Activated CD4-positive, alpha-beta T cell treated with anti-CD3 and anti-CD28 coated beads for 36 hours (primary cell): ENCODE measurements at regions of chr3 and their contacts with region 1.

Region 1: GRCh38 chr3:195259475-195260279 is 11.3 kb downstream of the XXYLT1 start:
- DNase-seq: peak; percentile 90
- ATAC-seq: peak; percentile 81
- H3K4me3 Mint-ChIP-seq: peak overlapping the region; percentile 30
- H3K27ac Mint-ChIP-seq: no peak overlapping the region
- H3K4me1 Mint-ChIP-seq: peaks cover 15% of the 10 kb centered on the region
- H3K27me3 Mint-ChIP-seq: no peaks in the 10 kb centered on the region

Region 2: DNA sequence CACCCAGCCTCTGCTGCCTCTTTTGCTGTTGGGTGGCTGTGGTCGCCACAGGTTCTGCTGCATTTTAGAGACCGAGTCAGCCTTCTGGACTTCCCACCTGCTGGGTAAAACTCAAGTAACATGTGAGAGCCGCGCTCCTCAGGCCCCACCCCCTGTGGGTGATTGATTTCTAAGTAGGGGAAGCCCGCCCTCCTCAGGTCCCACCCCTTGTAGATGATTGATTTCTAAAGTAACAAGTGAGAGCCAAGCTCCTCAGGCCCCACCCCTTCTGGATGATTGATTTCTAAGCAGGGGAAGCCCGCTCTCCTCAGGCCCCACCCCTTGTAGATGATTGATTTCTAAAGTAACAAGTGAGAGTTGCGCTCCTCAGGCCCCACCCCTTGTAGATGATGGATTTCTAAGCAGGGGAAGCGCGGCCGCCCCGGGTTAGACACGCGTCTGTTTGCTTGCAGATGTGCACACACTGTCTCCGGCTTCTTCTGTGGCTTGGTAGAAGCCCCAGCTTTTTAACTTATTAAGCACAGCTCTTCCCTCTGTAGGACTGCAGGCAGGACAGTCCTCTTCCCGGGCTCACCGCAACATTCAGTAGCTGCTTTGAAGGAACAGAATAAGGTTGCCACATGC is 490.5 kb before region 1 on chr3:
- CTCF ChIA-PET with region 1: no interaction called
- POLR2A ChIA-PET with region 1: no interaction called
- intact Hi-C with region 1: loop called (anchors 1 kb)
- DNase-seq: peak; percentile 96
- ATAC-seq: peak; percentile 99
- H3K4me3 Mint-ChIP-seq: peak overlapping the region; percentile 76
- H3K27ac Mint-ChIP-seq: peak overlapping the region; percentile 91
- H3K4me1 Mint-ChIP-seq: peaks cover 17% of the 10 kb centered on the region
- H3K27me3 Mint-ChIP-seq: peaks cover 9% of the 10 kb centered on the region

Region 3: DNA sequence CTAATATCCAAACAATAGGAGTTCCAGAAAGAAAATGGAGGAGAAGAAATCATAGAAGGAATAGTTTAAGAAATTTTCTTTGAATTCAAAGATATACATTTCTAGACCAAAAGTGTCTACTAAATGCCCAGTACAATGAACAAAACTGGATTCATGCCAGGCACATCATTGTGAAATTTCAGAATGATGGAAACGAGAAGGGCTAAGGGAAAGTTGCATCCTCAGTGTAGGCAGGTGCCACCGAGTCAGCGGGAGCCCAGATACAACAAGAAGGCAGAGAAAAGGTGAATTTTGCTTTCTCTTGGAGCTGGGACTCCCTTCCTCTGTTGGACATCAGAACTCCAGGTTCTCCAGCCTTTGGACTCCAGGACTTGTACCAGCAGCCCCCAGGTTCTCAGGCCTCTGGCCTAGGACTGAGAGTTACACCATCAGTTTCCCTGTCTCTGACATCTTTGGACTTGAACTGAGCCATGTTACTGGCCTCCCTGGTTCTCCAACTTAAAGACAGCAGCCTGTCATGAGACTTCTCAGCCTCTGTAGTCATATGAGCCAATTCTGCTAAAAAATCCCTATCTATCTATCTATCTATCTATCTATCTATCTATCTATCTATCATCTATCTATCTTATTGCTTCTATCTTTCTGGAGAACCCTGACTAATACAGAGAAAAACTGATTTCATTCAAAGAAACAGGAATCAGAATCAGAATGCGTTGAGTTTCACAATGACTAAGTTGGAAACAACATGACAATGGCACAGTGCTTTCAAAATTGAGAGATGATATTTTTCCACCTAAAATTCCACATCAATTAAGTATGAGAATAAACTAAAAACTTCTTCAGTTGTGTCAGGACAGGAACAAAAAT is 366.3 kb before region 1 on chr3:
- CTCF ChIA-PET with region 1: no interaction called
- POLR2A ChIA-PET with region 1: no interaction called
- intact Hi-C with region 1: loop called in 1 of 2 experiments (anchors 5 kb)
- DNase-seq: peak; percentile 43
- ATAC-seq: peak; percentile 86
- H3K4me3 Mint-ChIP-seq: no peak overlapping the region
- H3K27ac Mint-ChIP-seq: no peak overlapping the region
- H3K4me1 Mint-ChIP-seq: peaks cover 11% of the 10 kb centered on the region
- H3K27me3 Mint-ChIP-seq: peaks cover 21% of the 10 kb centered on the region

Region 4: DNA sequence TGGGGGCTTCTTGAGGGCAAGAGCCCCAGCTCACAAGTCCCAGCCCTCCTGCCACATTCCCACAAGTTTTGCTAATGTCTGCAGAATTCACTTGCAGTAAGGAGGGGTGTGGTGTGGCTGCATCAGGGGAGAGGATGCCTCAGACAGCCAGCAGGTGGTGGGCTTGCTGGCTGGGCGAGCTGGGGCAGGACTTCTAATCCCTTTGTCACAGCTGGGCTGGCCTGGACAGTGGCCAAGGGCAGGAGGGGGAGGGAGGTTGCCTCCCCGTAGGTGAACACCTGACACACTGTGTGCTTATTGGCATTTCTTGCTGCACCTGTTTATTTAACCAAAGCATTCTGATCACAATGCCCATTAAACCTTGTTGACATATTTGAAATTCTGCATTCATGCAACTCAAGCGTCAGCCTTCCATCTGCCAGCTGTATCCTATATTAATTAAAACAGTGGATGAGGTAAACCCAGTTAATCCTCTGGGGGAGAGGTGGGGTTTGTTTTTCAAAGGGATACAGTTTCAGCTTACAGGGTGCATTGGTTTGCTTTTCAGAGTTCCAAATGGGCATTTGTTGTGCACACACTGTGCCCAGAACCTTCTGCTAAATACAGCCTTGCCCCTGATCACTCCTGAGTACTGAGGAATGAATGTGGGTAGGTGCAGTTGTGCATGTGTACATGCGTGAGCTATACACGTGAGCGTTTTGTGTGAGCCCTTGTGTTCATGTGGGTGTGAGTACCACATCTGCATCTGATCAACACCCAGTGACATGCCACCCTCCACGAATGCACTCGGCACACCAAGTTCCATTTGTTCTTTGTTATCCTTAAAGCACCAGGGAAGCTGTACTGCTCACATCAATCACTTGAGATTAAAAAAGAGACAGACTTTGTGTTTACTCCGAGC is 257.5 kb before region 1 on chr3:
- CTCF ChIA-PET with region 1: interaction called, 3 read pairs
- POLR2A ChIA-PET with region 1: interaction called, 4 read pairs
- intact Hi-C with region 1: loop called in 1 of 2 experiments (anchors 2 kb)
- DNase-seq: peak; percentile 40
- ATAC-seq: no peak
- H3K4me3 Mint-ChIP-seq: no peak overlapping the region
- H3K27ac Mint-ChIP-seq: no peak overlapping the region
- H3K4me1 Mint-ChIP-seq: no peaks in the 10 kb centered on the region
- H3K27me3 Mint-ChIP-seq: peaks cover 5% of the 10 kb centered on the region

Region 5: DNA sequence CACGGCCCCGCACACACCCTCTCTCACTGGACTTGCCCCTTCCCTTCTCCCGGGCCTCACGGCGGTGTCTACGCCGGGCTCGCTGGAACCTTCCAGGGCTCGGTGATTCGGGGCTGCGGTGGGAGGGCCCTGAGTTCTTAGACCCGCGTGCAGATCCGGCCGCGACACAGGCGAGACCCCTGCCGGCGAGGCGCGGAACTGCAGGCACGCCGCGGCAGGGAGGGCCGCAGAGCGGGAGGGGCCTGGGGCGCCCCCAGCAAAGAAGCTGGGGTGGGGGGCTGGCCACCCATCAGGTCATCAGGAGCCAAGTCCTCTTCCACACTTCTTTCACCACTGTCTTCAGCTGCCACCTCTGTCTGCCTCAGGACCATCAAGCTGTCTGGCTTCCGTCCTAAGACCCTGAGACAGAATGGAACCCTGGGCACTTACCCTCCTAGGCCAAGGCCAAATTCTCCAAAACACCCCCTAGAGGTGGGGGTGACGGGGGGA is 153.2 kb before region 1 on chr3:
- CTCF ChIA-PET with region 1: no interaction called
- POLR2A ChIA-PET with region 1: no interaction called
- intact Hi-C with region 1: loop called in 1 of 2 experiments (anchors 1 kb)
- DNase-seq: peak; percentile 80
- ATAC-seq: peak; percentile 85
- H3K4me3 Mint-ChIP-seq: peak overlapping the region; percentile 9
- H3K27ac Mint-ChIP-seq: peak overlapping the region; percentile 55
- H3K4me1 Mint-ChIP-seq: peaks cover 4% of the 10 kb centered on the region
- H3K27me3 Mint-ChIP-seq: no peaks in the 10 kb centered on the region

Region 6: GRCh38 chr3:195129644-195130492 is 129.8 kb before region 1 on chr3:
- CTCF ChIA-PET with region 1: no interaction called
- POLR2A ChIA-PET with region 1: no interaction called
- intact Hi-C with region 1: loop called in 1 of 2 experiments (anchors 2 kb)
- DNase-seq: peak; percentile 64
- ATAC-seq: peak; percentile 67
- H3K4me3 Mint-ChIP-seq: peak overlapping the region; percentile 54
- H3K27ac Mint-ChIP-seq: peak overlapping the region; percentile 90
- H3K4me1 Mint-ChIP-seq: peaks cover 39% of the 10 kb centered on the region
- H3K27me3 Mint-ChIP-seq: no peaks in the 10 kb centered on the region

Region 7: GRCh38 chr3:195182470-195182795 is 77.2 kb before region 1 on chr3:
- CTCF ChIA-PET with region 1: no interaction called
- POLR2A ChIA-PET with region 1: no interaction called
- intact Hi-C with region 1: loop called in 1 of 2 experiments (anchors 2 kb)
- DNase-seq: peak; percentile 38
- ATAC-seq: peak; percentile 73
- H3K4me3 Mint-ChIP-seq: no peak overlapping the region
- H3K27ac Mint-ChIP-seq: peak overlapping the region; percentile 57
- H3K4me1 Mint-ChIP-seq: peaks cover 63% of the 10 kb centered on the region
- H3K27me3 Mint-ChIP-seq: no peaks in the 10 kb centered on the region

Region 8: DNA sequence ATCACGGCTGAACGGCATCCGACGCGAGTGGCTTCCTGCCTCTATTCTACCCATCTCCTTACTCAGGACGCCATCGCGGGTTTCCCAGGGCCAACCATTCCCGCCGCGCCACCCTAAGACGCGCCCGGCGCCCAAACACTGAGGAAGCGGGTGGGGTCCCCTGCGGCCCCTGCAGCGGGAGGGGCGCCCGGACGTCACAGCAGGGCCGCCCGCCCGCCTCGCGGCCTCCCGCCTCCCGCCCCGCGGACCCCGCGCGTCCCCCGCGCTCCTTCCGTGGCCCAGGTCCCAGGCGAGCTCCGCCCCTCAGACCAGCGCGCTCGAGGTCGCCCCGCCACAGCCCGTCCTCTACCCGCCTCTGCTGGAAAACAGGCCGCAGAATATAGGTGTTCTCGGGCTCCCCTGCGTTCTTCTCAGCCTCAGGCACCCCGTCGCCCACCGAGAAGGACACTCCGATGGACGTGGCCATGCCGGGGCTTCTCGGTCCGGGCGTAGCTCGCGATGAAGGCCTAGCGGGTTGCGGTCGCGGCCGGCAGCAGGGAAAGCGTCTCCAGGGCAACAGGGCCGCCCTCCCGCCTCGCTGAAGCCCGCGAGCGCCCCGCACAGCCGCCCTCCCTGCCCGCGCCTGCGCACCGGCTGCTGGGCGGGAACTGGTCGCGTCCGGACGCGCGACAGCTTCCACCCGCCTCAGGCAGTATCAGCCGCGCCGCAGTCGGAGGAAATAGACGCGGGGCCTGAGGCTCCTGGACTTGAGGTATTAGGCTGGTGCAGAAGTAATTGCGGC is 1058.2 kb after region 1 on chr3 and contains the start of gene DYNLT2B:
- CTCF ChIA-PET with region 1: no interaction called
- POLR2A ChIA-PET with region 1: no interaction called
- intact Hi-C with region 1: no loop called
- DNase-seq: peak; percentile 93
- ATAC-seq: peak; percentile 92
- H3K4me3 Mint-ChIP-seq: peak within 1 kb of the TSS; percentile 91
- H3K27ac Mint-ChIP-seq: peak within 1 kb of the TSS; percentile 95
- H3K4me1 Mint-ChIP-seq: peaks cover 12% of the 10 kb centered on the region
- H3K27me3 Mint-ChIP-seq: no peaks in the 10 kb centered on the region
- total RNA-seq, gene DYNLT2B: 7.3 to 16.3 TPM